ENCODE measurements at regions of chr4 and their contacts with region 1.

Region 1: DNA sequence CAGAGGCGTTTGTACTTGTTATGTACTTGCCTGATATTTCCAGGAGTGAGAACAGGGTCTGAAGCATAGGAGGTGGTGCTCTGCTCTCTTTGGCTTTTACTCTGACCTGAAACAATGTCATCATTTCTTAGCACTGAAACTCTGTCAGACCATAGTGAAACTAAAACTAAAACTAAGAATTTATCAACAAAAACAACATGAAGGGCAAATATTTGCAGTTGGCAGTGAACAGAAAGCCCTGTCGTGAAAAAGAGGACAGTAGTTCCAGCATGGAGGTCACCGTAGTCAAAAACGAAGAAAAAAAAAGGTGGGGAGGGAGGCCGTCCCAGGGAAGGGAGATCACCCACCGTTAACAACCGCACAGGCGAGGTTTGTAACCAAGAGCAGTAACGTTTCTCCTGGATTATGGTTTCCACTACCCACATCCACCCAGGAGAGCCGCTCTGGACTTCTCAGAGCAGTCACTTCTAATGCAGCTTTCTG is 97.5 kb downstream of the ANK2 start:
- DNase-seq: no peak

Region 2: GRCh38 chr4:113114884-113115283 is 32.0 kb before region 1 on chr4:
- intact Hi-C with region 1: loop called (anchors 5 kb)
- DNase-seq: no peak

Region 3: DNA sequence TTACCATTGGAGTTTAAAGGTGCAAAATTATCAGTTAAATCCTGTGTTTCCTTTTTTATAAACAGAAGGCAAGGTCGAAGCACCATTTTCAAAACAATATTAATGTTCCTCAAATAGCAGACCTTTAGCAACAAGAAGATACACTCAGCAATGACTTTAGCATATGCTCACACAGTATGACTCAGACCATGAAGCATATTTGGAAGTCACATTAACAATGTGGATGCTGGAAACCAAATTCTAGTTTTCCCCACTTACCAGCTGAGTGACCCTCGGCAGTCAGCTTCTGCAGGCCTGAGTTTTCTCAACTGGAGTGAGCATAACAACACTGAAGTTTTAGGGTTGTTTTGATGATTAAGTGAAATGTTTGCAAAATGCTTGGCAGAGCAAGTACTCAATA is 33.1 kb after region 1 on chr4:
- intact Hi-C with region 1: loop called (anchors 5 kb)
- DNase-seq: no peak